ENCODE measurements at regions of chr15 and their contacts with region 1.

Region 1: DNA sequence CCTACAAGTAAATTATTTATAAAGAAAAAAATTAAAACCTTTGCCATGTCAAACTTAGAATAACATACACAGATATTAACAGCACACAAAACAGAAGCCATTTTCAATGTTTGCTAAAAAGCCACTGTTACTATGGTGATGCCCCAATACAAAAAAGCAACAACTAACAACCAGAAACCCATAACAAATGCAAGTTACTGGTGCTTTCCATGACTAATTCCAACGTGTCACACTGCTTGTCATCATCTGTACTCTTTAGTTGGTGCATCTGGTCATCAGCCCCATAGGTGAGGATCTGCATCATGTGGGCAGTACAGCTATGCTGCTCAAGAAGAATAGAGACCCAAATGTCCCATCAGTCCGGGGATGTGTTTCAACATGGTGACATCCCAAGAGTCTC is 52.8 kb downstream of the ATP8B4 start:
- DNase-seq: peak; percentile 22
- H3K4me3 Mint-ChIP-seq: no peak overlapping the region
- H3K27ac Mint-ChIP-seq: no peak overlapping the region
- H3K4me1 Mint-ChIP-seq: peaks cover 8% of the 10 kb centered on the region
- H3K27me3 Mint-ChIP-seq: peaks cover 10% of the 10 kb centered on the region

Region 2: DNA sequence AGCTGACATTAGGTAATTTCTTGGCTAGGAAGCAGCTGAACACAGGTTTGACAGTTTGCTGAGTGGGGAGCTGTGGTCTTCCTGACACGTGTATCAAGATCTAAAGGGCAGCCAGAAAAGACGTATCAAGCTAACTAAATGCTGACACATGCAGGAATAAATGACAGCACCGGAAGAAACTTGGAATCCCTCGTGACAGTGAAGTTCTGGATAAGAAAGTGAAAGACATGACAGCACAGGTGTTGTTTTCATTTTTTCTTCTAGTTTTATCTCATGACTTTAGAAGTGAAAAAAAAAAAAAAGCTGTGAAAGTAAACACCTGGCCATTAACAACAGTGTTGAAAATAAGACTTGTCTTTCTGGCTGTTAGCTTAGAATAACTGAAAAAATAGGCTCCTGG is 594.5 kb before region 1 on chr15:
- CTCF ChIA-PET with region 1: no interaction called
- POLR2A ChIA-PET with region 1: no interaction called
- intact Hi-C with region 1: loop called (anchors 10 kb)
- DNase-seq: peak; percentile 11
- H3K4me3 Mint-ChIP-seq: no peak overlapping the region
- H3K27ac Mint-ChIP-seq: no peak overlapping the region
- H3K4me1 Mint-ChIP-seq: peaks cover 5% of the 10 kb centered on the region
- H3K27me3 Mint-ChIP-seq: no peaks in the 10 kb centered on the region

Region 3: GRCh38 chr15:49706805-49707204 is 359.4 kb before region 1 on chr15:
- CTCF ChIA-PET with region 1: no interaction called
- POLR2A ChIA-PET with region 1: no interaction called
- intact Hi-C with region 1: no loop called
- DNase-seq: no peak
- H3K4me3 Mint-ChIP-seq: no peak overlapping the region
- H3K27ac Mint-ChIP-seq: no peak overlapping the region
- H3K4me1 Mint-ChIP-seq: no peaks in the 10 kb centered on the region
- H3K27me3 Mint-ChIP-seq: no peaks in the 10 kb centered on the region

Region 4: GRCh38 chr15:50107591-50108408 is 41.6 kb after region 1 on chr15:
- CTCF ChIA-PET with region 1: no interaction called
- POLR2A ChIA-PET with region 1: no interaction called
- intact Hi-C with region 1: loop called (anchors 1 kb)
- DNase-seq: peak; percentile 65
- H3K4me3 Mint-ChIP-seq: no peak overlapping the region
- H3K27ac Mint-ChIP-seq: peak overlapping the region; percentile 30
- H3K4me1 Mint-ChIP-seq: peaks cover 23% of the 10 kb centered on the region
- H3K27me3 Mint-ChIP-seq: peaks cover 2% of the 10 kb centered on the region

Measured in activated CD4-positive, alpha-beta memory T cell treated with anti-CD3 and anti-CD28 coated beads for 36 hours (primary cell).